ENCODE measurements at regions of chr14 and their contacts with region 1.

Region 1: DNA sequence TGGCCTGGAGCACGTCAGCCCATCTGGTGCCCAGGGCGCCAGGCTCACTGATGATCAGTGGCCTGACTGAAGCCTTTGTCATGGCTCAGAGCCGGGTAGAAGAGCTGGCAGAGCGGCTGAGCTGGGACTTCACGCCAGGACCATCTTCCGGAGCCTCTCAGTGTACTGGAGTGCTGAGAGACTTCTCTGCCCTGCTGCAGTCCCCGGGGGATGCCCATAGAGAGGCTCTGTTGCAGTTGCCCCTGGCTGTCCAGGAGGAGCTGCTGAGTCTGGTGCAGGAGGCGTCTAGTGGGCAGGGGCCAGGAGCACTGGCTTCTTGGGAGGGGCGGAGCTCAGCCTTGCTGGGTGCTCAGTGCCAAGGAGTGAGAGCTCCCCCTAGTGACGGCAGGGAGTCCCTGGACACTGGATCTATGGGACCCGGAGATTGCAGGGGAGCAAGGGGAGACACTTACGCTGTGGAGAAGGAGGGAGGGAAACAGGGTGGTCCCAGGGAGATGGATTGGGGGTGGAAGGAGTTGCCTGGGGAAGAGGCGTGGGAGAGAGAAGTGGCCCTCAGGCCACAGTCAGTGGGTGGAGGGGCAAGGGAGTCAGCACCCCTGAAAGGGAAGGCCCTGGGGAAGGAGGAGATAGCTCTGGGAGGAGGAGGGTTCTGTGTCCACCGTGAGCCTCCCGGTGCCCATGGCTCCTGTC is 2.0 kb downstream of the KHNYN start:
- DNase-seq: peak; percentile 91 to 95
- ATAC-seq: peak; percentile 75 to 84 (median 82)
- H3K4me3 ChIP-seq: peak overlapping the region; percentile 84
- H3K27ac ChIP-seq: peak overlapping the region; percentile 98
- H3K4me1 ChIP-seq: peaks cover 23% of the 10 kb centered on the region
- H3K27me3 ChIP-seq: no peaks in the 10 kb centered on the region
- CTCF ChIP-seq: peak; percentile 82

Region 2: DNA sequence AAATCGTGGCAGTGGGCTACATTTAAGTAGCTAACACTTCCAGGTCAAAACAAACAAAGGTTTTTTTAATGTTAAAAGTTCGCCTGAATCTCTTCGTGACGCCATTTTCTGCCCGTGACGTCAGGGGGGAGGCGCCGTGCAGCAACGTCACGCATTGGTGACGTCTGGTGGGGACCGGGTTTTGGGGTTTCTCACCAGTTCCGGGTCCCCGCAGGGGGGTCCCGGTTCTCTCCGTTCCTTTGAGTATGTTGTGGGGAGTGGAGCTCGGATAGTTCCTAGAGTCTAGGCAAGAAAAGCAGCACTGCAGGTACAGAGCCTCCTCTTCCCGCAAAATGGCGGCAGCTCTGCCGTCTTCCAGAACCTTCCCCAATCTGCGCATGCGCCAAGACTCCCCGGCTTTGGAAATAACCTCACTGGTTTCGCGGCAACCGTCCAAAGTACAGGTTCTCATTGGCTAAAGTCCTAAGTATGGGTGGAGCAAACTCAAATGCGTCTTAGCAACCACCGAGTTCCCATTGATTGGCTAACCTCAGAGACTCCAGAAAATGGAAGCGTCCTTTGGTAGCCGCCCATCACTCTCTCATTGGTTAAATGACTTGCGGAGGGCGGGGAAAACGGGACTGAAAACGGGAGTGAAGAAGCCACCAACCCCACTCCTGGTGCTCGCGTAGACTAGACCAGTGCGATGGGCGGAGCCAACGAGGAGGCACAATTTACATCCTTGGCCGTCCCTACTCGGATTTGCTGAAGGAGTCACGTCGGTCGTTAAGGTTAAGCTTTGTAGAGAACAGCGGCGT is 1512.7 kb before region 1 on chr14 and contains the start of gene RBM23:
- intact Hi-C with region 1: loop called in 1 of 2 experiments (anchors 5 kb)
- DNase-seq: peak; percentile 100
- ATAC-seq: peak; percentile 92 to 94 (median 94)
- H3K4me3 ChIP-seq: peak within 1 kb of the TSS; percentile 98
- H3K27ac ChIP-seq: peak within 1 kb of the TSS; percentile 98
- H3K4me1 ChIP-seq: peaks cover 15% of the 10 kb centered on the region
- H3K27me3 ChIP-seq: no peaks in the 10 kb centered on the region
- CTCF ChIP-seq: no peak
- total RNA-seq, gene RBM23: 25.4 to 42.1 (median 27.8) TPM

Region 3: DNA sequence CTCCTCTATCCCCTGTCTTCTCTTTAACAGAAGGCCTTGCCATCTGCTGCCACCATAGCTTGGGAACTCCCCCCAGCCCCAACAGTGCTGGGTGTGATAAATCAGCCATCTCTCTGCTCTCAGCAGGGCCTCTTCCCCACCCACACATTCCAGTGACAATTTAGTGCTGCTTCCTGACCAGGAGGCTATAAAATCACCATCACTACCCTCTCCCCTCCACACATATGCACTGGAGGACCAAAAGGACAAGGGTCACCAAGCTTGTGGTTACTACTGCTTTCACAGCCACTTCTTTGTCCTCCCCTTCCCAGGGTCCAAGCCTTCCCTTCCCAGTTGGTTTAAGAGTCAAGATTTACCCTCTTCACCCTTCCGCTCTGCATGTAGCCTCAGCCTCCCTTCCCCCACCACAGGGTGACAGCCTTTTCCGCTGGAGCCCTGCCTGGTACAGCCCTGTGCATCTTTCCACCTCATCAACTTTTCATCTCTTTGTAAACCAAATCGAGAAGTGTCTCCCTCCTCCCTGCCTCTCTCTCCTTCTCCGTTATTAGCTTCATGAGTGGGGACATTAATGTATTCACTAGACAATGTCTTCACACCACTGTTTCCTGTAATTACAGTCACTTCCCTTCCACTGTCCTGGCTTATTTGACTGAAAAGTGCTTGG is 1406.4 kb before region 1 on chr14:
- intact Hi-C with region 1: no loop called
- DNase-seq: no peak
- ATAC-seq: no peak
- H3K4me3 ChIP-seq: no peak overlapping the region
- H3K27ac ChIP-seq: no peak overlapping the region
- H3K4me1 ChIP-seq: peaks cover 10% of the 10 kb centered on the region
- H3K27me3 ChIP-seq: no peaks in the 10 kb centered on the region
- CTCF ChIP-seq: no peak

Region 4: GRCh38 chr14:24241829-24242443 is 189.8 kb before region 1 on chr14:
- intact Hi-C with region 1: loop called (anchors 5 to 10 kb)
- DNase-seq: peak; percentile 94 to 97
- ATAC-seq: peak; percentile 87 to 92 (median 90)
- H3K4me3 ChIP-seq: peak overlapping the region; percentile 71
- H3K27ac ChIP-seq: peak overlapping the region; percentile 92
- H3K4me1 ChIP-seq: peaks cover 44% of the 10 kb centered on the region
- H3K27me3 ChIP-seq: no peaks in the 10 kb centered on the region
- CTCF ChIP-seq: peak; percentile 65

Region 5: DNA sequence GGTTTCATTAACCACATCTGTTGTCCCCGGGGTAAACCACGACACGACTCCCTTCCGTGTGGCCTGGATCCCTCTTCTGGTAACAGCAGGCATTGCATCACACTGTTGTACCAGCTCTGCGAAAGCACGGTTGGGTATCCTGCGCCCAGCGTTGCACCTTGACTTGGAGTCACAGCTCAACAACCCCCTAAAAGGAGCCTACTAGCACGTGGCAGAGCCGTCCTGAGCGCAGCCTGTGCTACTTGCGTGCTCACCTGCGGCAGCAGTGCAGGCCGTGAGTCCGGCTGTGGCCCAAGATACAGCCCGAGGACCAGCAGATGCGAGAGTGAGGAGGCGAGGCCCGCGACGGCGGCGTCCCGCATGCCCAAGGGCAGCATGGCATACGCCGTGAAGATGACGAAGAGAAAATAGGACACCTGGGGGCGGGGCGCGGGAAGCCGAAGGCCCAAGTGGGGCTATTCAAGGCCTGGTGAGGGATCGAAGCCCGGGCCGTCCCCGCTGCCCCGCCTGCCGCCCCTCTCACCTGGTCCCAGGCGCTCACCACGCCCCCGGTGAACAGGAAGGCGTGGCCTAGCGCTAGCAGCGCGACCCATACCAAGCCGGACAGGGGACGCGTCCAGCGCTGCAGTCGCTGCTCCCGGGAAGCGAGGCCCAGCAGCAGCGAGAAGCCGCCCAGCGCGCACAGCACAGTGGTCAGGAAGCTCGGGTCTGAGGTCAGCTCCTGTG is 99.3 kb before region 1 on chr14:
- intact Hi-C with region 1: loop called (anchors 1 to 2 kb)
- DNase-seq: peak; percentile 54 to 75
- ATAC-seq: peak; percentile 68 to 79 (median 72)
- H3K4me3 ChIP-seq: peak overlapping the region; percentile 35
- H3K27ac ChIP-seq: no peak overlapping the region
- H3K4me1 ChIP-seq: peaks cover 10% of the 10 kb centered on the region
- H3K27me3 ChIP-seq: peaks cover 0 to 39% (median 4%) of the 10 kb centered on the region in 3 donors
- CTCF ChIP-seq: peak; percentile 59

Region 6: GRCh38 chr14:24366721-24367513 is 64.8 kb before region 1 on chr14:
- intact Hi-C with region 1: loop called in 1 of 2 experiments (anchors 1 kb)
- DNase-seq: peak; percentile 88 to 93
- ATAC-seq: peak; percentile 41 to 80 (median 72)
- H3K4me3 ChIP-seq: peak overlapping the region; percentile 64
- H3K27ac ChIP-seq: peak overlapping the region; percentile 76
- H3K4me1 ChIP-seq: peaks cover 12% of the 10 kb centered on the region
- H3K27me3 ChIP-seq: peaks cover 0 to 47% (median 12%) of the 10 kb centered on the region in 3 donors
- CTCF ChIP-seq: no peak

Region 7: DNA sequence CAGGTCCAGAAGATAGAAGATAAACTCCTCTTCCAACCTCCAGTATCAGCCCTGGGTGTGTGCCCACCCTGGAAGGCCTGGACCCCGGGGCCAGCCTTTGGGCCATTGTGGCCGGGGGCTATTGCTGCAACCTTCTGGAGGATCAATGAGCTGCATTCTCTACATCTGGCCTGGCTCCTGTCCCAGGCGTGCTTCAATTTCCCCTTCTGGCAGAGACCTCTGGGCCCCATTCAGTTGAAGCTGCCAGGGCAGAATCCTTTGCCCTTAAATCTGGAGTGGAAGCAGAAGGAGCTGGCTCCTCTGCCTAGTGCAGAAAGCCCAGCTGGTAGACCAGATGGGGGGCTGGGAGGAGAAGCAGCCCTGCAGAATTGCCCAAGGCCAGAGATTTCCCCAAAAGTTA is 22.9 kb before region 1 on chr14:
- intact Hi-C with region 1: loop called in 1 of 2 experiments (anchors 1 kb)
- DNase-seq: no peak
- ATAC-seq: no peak
- H3K4me3 ChIP-seq: no peak overlapping the region
- H3K27ac ChIP-seq: no peak overlapping the region
- H3K4me1 ChIP-seq: peaks cover 3% of the 10 kb centered on the region
- H3K27me3 ChIP-seq: no peaks in the 10 kb centered on the region
- CTCF ChIP-seq: no peak

Measured in psoas muscle (tissue), 8 donors.